ENCODE measurements at regions of chr16 and their contacts with region 1.

Region 1: GRCh38 chr16:70380861-70381603 is 34.3 kb downstream of the DDX19A start:
- DNase-seq: peak; percentile 99
- H3K4me3 ChIP-seq: peak overlapping the region; percentile 87
- H3K27ac ChIP-seq: peak overlapping the region; percentile 91
- H3K4me1 ChIP-seq: peaks cover 6% of the 10 kb centered on the region
- H3K27me3 ChIP-seq: no peaks in the 10 kb centered on the region
- CTCF ChIP-seq: 0 out of 2 replicates have a peak, but pooled peaks have one; percentile 30

Region 2: GRCh38 chr16:69906838-69907401 is 474.1 kb before region 1 on chr16:
- CTCF ChIA-PET with region 1: no interaction called
- POLR2A ChIA-PET with region 1: no interaction called
- intact Hi-C with region 1: no loop called
- DNase-seq: no peak
- H3K4me3 ChIP-seq: no peak overlapping the region
- H3K27ac ChIP-seq: no peak overlapping the region
- H3K4me1 ChIP-seq: no peaks in the 10 kb centered on the region
- H3K27me3 ChIP-seq: no peaks in the 10 kb centered on the region
- CTCF ChIP-seq: no peak

Region 3: DNA sequence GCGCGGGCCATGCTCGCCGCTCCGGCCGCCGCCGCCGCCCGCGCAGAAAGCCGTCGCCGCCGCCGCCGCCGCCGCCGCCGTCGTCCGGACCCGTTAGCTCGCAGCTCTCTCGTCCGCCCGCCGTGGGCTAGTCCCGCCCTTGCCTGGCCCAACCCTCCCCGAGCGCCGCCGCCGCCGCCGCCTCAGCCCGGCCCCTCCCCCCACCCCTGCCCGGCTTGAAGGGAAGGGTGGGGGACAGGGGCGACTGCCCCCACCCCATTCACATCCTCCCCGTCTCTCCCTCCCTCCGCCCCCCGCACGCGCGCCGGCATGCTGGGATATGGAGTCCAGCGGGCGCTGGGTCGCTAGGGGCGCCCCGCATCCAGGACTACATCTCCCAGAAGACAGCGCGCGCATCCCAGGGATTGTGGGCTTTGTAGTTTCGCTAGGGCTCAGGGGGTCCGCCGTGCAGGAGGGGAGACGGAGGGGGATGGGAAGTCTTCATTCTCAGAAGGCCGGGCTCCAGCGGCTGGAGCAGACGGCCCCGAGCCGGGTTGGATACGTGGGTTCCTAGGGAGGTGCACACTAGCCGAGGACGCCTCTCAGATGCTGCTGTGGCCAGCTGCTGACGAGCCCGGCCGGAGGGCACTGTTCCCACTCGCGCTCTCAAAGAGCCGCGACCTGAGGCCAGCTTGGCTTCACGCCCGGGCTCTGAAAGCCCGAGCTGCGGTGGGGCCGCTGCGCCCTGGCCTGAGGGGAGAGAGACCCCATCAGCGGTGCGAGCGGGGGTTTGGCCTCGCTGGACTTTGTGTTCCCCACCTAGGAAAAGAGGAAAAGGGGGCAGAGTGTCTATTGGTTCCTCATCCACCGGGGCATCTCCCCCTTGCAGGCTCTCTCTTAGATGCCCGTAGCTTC is 58.2 kb after region 1 on chr16 and contains the start of gene ST3GAL2:
- CTCF ChIA-PET with region 1: no interaction called
- POLR2A ChIA-PET with region 1: interaction called, 4 read pairs
- intact Hi-C with region 1: loop called (anchors 2 kb)
- DNase-seq: peak; percentile 99
- H3K4me3 ChIP-seq: peak within 1 kb of the TSS; percentile 73
- H3K27ac ChIP-seq: peak within 1 kb of the TSS; percentile 63
- H3K4me1 ChIP-seq: peaks cover 16% of the 10 kb centered on the region
- H3K27me3 ChIP-seq: no peaks in the 10 kb centered on the region
- CTCF ChIP-seq: no peak
- total RNA-seq, gene ST3GAL2: 26.5 and 29.0 TPM in 2 replicates

Region 4: GRCh38 chr16:70523076-70523742 is 142.2 kb after region 1 on chr16 and contains the start of gene COG4:
- CTCF ChIA-PET with region 1: no interaction called
- POLR2A ChIA-PET with region 1: interaction called, 3 read pairs
- intact Hi-C with region 1: loop called (anchors 2 kb)
- DNase-seq: peak; percentile 92
- H3K4me3 ChIP-seq: peak within 1 kb of the TSS; percentile 67
- H3K27ac ChIP-seq: peak within 1 kb of the TSS; percentile 93
- H3K4me1 ChIP-seq: peaks cover 27% of the 10 kb centered on the region
- H3K27me3 ChIP-seq: no peaks in the 10 kb centered on the region
- CTCF ChIP-seq: no peak
- total RNA-seq, gene COG4: 68.6 and 82.4 TPM in 2 replicates

Region 5: GRCh38 chr16:70601576-70602575 is 220.8 kb after region 1 on chr16:
- CTCF ChIA-PET with region 1: no interaction called
- POLR2A ChIA-PET with region 1: interaction called, 12 read pairs
- intact Hi-C with region 1: no loop called
- DNase-seq: no peak
- H3K4me3 ChIP-seq: no peak overlapping the region
- H3K27ac ChIP-seq: no peak overlapping the region
- H3K4me1 ChIP-seq: no peaks in the 10 kb centered on the region
- H3K27me3 ChIP-seq: no peaks in the 10 kb centered on the region
- CTCF ChIP-seq: no peak

Measured in A673 (cell line).